Heart right ventricle (tissue), 16 donors: ENCODE measurements at regions of chr7 and their contacts with region 1.

Region 1: GRCh38 chr7:36128448-36129047 is 24.5 kb upstream of the EEPD1 start:
- DNase-seq: peak; percentile 75
- ATAC-seq: peak; percentile 86 to 96 (median 89)
- H3K4me3 ChIP-seq: peak overlapping the region in 5 of 10 donors; percentile 2 to 15 (median 8)
- H3K27ac ChIP-seq: peak overlapping the region; percentile 61 to 85 (median 72)
- H3K4me1 ChIP-seq: peaks cover 10 to 49% (median 25%) of the 10 kb centered on the region in 9 donors
- H3K27me3 ChIP-seq: no peaks in the 10 kb centered on the region
- CTCF ChIP-seq: peak; percentile 52 to 80 (median 69)

Region 2: DNA sequence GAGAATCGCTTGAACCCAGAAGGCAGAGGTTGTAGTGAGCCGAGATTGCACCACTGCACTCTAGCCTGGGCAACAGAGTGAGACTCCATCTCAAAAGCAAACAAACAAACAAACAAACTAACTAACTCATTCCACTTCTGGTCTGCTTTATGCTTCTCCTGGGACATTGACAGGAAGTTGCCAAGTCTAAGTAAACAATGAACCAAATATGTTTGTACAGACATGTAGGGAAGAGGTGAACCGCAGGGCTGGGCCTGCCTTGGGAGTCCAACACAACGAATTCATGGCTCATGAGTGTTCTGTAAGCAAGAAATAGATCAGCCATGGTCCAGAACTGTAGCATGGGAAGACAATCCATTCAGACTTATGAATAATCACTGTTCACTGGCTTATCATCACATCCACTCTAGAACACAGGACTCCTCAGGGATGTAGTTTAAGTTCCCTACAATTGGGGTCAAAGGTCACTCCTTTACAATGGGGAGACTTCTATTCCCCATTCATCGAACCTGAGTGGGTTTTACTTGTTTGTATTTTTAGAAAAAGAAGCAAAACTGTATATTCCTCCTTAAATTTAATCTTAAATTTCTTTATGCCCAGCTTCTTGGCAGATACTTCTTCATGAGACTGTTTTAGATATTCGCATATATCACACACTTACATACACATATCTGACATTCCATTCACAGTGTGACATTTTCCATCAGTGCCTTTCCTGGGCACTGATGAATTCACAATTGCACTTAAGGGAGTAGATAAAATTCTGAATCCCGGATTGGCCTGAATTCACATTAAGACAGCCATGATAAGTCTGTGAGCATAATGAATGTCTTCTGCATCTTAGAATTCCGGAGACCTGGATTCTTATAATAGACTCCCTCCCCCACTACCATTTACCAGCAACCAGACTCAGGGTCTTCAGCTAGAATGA is 134.6 kb before region 1 on chr7:
- intact Hi-C with region 1: no loop called
- DNase-seq: no peak
- ATAC-seq: peak in 6 of 8 donors; percentile 55 to 71 (median 58)
- H3K4me3 ChIP-seq: no peak overlapping the region
- H3K27ac ChIP-seq: peak overlapping the region in 3 of 10 donors; percentile 0 to 19 (median 6)
- H3K4me1 ChIP-seq: peaks cover 0 to 15% (median 0%) of the 10 kb centered on the region in 9 donors
- H3K27me3 ChIP-seq: no peaks in the 10 kb centered on the region
- CTCF ChIP-seq: no peak

Region 3: DNA sequence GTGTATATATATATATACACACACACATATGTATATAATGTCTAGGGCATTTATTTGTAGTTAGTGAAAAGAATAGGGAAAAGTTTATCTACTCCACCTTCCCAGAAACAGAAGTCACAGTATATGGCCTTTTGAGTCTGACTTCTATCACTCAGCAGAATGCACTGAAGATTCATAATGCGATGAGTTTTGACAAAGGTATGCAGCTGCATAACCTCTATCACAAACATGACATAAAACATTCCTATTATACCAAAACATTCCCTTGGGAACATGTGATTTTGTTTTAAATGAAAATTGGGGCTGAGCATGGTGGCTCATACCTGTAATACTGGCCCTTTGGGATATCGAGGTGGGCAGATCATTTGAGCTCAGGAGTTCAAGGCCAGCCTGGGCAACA is 112.8 kb before region 1 on chr7:
- intact Hi-C with region 1: loop called in 1 of 10 experiments (anchors 10 kb)
- DNase-seq: no peak
- ATAC-seq: no peak
- H3K4me3 ChIP-seq: no peak overlapping the region
- H3K27ac ChIP-seq: no peak overlapping the region
- H3K4me1 ChIP-seq: no peaks in the 10 kb centered on the region
- H3K27me3 ChIP-seq: no peaks in the 10 kb centered on the region
- CTCF ChIP-seq: no peak